Right lobe of liver (tissue), 6 donors: ENCODE measurements at regions of chr2 and their contacts with region 1.

Region 1: GRCh38 chr2:39227628-39228412 is 15.9 kb downstream of the CDKL4 start:
- DNase-seq: peak; percentile 77 to 83 (median 82)
- ATAC-seq: peak; percentile 95 to 97 (median 96)
- H3K4me3 ChIP-seq: no peak overlapping the region
- H3K27ac ChIP-seq: no peak overlapping the region
- H3K4me1 ChIP-seq: no peaks in the 10 kb centered on the region
- H3K27me3 ChIP-seq: no peaks in the 10 kb centered on the region
- CTCF ChIP-seq: peak; percentile 76 to 95 (median 90)
- POLR2A ChIP-seq: no peak

Region 2: GRCh38 chr2:39059366-39059952 is 168.4 kb before region 1 on chr2:
- intact Hi-C with region 1: loop called (anchors 5 to 10 kb)
- DNase-seq: no peak
- ATAC-seq: peak in 3 of 4 donors; percentile 54 to 59 (median 55)
- H3K4me3 ChIP-seq: no peak overlapping the region
- H3K27ac ChIP-seq: no peak overlapping the region
- H3K4me1 ChIP-seq: no peaks in the 10 kb centered on the region
- H3K27me3 ChIP-seq: no peaks in the 10 kb centered on the region
- CTCF ChIP-seq: peak; percentile 64 to 78 (median 75)
- POLR2A ChIP-seq: no peak

Region 3: GRCh38 chr2:39119732-39120520 is 107.9 kb before region 1 on chr2:
- intact Hi-C with region 1: loop called in 1 of 2 experiments (anchors 5 kb)
- DNase-seq: peak; percentile 70 to 78 (median 74)
- ATAC-seq: peak; percentile 34 to 61 (median 55)
- H3K4me3 ChIP-seq: peak overlapping the region; percentile 82 to 85 (median 82)
- H3K27ac ChIP-seq: peak overlapping the region; percentile 93 to 98 (median 98)
- H3K4me1 ChIP-seq: peaks cover 0 to 29% (median 11%) of the 10 kb centered on the region in 4 donors
- H3K27me3 ChIP-seq: no peaks in the 10 kb centered on the region
- CTCF ChIP-seq: peak; percentile 22 to 53 (median 32)
- POLR2A ChIP-seq: no peak